ENCODE measurements at regions of chr16 and their contacts with region 1.

Region 1: DNA sequence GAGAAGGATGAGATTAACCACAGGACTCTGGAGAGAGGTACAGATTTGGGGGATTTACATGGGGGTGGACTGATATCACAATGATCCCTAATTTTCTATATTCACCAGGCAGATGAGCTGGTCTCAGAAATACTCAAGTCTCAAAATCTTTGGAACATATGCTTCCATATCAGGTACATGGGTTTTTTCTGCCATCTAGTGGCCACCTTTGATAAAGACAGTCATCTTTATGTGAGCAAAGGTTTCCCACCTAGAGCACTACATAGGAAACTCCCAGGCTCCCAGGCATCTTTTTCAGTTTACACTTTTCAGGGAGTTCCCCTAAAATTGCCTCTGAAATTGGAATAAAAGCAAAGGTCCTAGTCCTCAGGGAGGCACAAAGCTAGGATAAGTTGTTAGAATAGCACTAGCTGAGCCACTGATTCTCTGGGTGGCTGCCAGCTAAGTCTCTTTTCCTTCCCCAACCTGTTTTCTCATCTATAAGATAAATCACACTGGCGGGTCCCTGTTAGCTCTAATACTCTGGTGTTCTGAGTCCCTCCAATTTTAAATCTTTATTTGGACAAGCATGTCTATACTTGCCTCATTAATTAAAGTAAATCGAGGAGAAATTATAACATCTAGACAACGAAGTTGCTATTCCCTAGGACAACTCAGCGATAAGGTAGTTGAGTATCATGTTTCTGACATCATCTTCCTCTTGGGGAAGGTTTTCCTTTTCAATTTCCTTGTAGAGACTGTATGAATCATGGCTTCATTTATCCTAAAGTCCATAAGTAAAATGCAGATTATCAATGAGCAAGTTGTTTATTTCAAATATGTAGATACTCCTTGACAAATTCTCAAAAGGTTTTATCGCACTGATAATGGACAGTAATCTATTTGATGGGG is 19.0 kb upstream of the MON1B start:
- DNase-seq: peak; percentile 15 to 41 (median 38)
- H3K4me3 ChIP-seq: no peak overlapping the region
- H3K4me3 Mint-ChIP-seq: no peak overlapping the region
- H3K27ac ChIP-seq: no peak overlapping the region
- H3K27ac Mint-ChIP-seq: no peak overlapping the region
- H3K4me1 ChIP-seq: no peaks in the 10 kb centered on the region
- H3K4me1 Mint-ChIP-seq: no peaks in the 10 kb centered on the region
- H3K27me3 ChIP-seq: peaks cover 4 to 5% of the 10 kb centered on the region in 2 donors
- H3K27me3 Mint-ChIP-seq: peaks cover 9 to 26% (median 13%) of the 10 kb centered on the region in 3 donors
- CTCF ChIP-seq: peak; percentile 84

Region 2: DNA sequence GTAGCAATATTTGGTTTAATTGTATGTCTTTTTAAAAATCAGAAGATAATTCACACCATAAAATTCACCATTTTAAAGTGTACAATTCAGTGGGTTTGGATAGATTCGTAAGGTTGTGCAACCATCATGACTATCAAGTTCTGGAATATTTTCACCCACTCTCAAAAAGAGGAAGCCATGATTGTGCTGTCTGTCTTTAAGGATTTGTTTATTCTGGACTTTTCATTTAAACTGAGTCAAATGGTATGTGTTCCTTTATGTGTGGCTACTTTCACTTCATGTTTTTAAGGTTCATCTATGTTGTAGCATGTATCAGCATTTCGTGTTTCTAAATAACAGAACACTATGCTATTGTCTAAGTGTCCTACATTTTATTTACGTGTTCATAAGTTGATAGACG is 1377.6 kb before region 1 on chr16:
- intact Hi-C with region 1: loop called in 1 of 2 experiments (anchors 5 kb)
- DNase-seq: peak in 2 of 3 donors; percentile 11 to 68
- H3K4me3 ChIP-seq: no peak overlapping the region
- H3K4me3 Mint-ChIP-seq: no peak overlapping the region
- H3K27ac ChIP-seq: no peak overlapping the region
- H3K27ac Mint-ChIP-seq: no peak overlapping the region
- H3K4me1 ChIP-seq: no peaks in the 10 kb centered on the region
- H3K4me1 Mint-ChIP-seq: peaks cover 6% of the 10 kb centered on the region
- H3K27me3 ChIP-seq: no peaks in the 10 kb centered on the region
- H3K27me3 Mint-ChIP-seq: peaks cover 1 to 9% (median 5%) of the 10 kb centered on the region in 3 donors
- CTCF ChIP-seq: no peak

Measured in CD14-positive monocyte (primary cell).